ENCODE measurements at regions of chr12 and their contacts with region 1.

Region 1: GRCh38 chr12:122813310-122813713 is 21.9 kb upstream of the HIP1R start:
- DNase-seq: no peak
- ATAC-seq: peak in 1 of 2 experiments; percentile 23; a peak in 2 of 6 replicates
- H3K4me3 ChIP-seq: no peak overlapping the region
- H3K27ac ChIP-seq: no peak overlapping the region
- H3K4me1 ChIP-seq: no peaks in the 10 kb centered on the region
- CTCF ChIP-seq: no peak
- EP300 ChIP-seq: no peak
- POLR2A ChIP-seq: no peak
- RAD21 ChIP-seq: no peak

Region 2: GRCh38 chr12:122726080-122726558 is 87.2 kb before region 1 on chr12:
- CTCF ChIA-PET with region 1: no interaction called
- POLR2A ChIA-PET with region 1: no interaction called
- DNase-seq: peak in 1 of 2 experiments; percentile 24
- ATAC-seq: peak in 1 of 2 experiments; percentile 19; a peak in 1 of 6 replicates
- H3K4me3 ChIP-seq: no peak overlapping the region
- H3K27ac ChIP-seq: peak overlapping the region in 1 of 2 experiments; percentile 25; a peak in 2 of 6 replicates
- H3K4me1 ChIP-seq: peaks cover 10% of the 10 kb centered on the region
- CTCF ChIP-seq: no peak
- EP300 ChIP-seq: no peak
- POLR2A ChIP-seq: no peak
- RAD21 ChIP-seq: no peak

Region 3: DNA sequence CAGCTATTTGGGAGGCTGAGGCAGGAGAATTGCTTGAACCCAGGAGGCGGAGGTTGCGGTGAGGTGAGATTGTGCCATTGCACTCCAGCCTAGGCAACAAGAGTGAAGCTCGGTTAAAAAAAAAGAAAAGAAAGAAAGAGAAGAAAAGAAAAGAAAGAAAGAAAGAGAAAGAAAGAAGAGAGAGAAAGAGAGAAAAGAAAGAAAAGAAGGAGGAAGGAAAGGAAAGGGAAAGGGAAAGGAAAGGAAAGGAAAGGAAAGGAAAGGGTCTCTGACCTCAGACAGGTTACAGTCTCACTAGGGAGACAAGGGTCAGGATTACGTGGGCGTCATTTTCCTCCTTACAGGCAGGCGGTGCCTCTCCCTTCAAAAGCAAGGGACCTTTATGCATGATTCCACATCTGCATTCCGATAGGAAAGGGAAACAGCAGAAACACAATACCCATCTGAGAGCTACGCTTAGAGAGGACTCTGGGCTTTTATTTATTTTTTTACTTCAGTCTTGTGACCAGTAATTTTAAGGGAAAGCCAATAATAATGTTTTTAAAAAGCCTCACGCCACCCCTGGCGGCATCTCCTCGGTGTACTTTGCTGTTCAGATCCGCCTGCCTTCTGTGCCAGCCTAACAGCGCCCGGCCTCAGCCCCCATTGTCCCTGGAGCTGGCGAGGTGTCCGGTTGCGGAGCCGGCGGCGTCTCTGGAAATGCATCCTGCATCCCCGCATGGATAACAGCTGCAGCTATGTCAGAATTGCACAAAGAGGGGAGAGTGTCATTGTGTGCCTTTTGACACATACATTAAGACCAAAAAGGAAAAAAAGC is 21.0 kb after region 1 on chr12:
- CTCF ChIA-PET with region 1: interaction called, 12 read pairs
- POLR2A ChIA-PET with region 1: no interaction called
- DNase-seq: peak; percentile 79 to 82
- ATAC-seq: peak; percentile 74 to 84
- H3K4me3 ChIP-seq: peak overlapping the region; percentile 98
- H3K27ac ChIP-seq: peak overlapping the region; percentile 82 to 87
- H3K4me1 ChIP-seq: peaks cover 26% of the 10 kb centered on the region
- CTCF ChIP-seq: peak; percentile 23; the same call in 1 of the 3 replicates
- EP300 ChIP-seq: no peak
- POLR2A ChIP-seq: no peak
- RAD21 ChIP-seq: no peak

Measured in A549 (cell line).